ENCODE measurements at regions of chr12 and their contacts with region 1.

Region 1: GRCh38 chr12:52380271-52380694 is 5.2 kb downstream of the KRT84 start:
- DNase-seq: peak; percentile 53
- H3K4me3 ChIP-seq: no peak overlapping the region
- H3K27ac ChIP-seq: no peak overlapping the region
- H3K4me1 ChIP-seq: no peaks in the 10 kb centered on the region; a peak in 1 of 4 replicates
- H3K27me3 ChIP-seq: peaks cover 75% of the 10 kb centered on the region
- CTCF ChIP-seq: peak; percentile 68
- EP300 ChIP-seq: no peak
- RAD21 ChIP-seq: peak; percentile 47

Region 2: DNA sequence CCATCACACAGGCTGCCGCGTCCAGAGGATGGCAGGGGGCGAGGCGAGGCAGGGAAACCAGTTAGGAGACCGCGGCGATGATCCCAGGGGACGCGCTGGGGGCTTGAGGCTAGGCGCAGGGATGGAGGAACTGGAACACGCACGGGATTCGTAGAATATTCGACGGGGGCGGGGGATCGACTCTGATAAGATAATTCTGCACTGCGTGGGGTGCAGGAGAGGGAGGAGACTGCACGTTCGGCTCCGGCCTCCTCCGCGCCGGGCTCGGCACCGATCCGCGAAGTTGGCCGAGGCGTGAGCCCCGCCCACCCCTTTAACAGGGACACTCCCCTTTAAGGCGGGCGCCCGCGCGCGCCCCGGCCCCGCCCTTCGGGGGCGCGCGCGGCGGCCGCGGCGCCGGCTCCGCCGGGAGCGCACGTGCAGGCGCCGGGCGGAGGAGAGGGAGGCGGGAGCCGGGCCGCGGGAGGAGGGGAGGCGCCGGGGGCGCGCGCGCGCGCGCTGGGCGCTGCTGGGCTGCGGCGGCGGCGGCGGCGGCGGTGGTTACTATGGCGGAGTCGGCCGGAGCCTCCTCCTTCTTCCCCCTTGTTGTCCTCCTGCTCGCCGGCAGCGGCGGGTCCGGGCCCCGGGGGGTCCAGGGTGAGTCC is 429.0 kb before region 1 on chr12 and contains the start of gene ACVR1B:
- CTCF ChIA-PET with region 1: no interaction called
- POLR2A ChIA-PET with region 1: no interaction called
- DNase-seq: peak; percentile 95
- H3K4me3 ChIP-seq: peak within 1 kb of the TSS; percentile 84 to 94
- H3K27ac ChIP-seq: peak within 1 kb of the TSS in 1 of 2 experiments; percentile 89; a peak in 2 of 4 replicates
- H3K4me1 ChIP-seq: peaks cover 6 to 20% of the 10 kb centered on the region in 2 experiments; a peak in 2 of 4 replicates
- H3K27me3 ChIP-seq: 0 out of 2 replicates have a peak, but pooled peaks cover 9% of the 10 kb centered on the region
- CTCF ChIP-seq: no peak
- EP300 ChIP-seq: no peak; a peak in 1 of 4 replicates
- RAD21 ChIP-seq: peak; percentile 10; the same call in 1 of the 2 replicates
- polyA plus RNA-seq, gene ACVR1B: 12.1 and 13.5 TPM in 2 replicates

Region 3: GRCh38 chr12:52390739-52391617 is 10.7 kb after region 1 on chr12:
- CTCF ChIA-PET with region 1: interaction called, 14 read pairs
- POLR2A ChIA-PET with region 1: no interaction called
- DNase-seq: peak; percentile 44
- H3K4me3 ChIP-seq: no peak overlapping the region
- H3K27ac ChIP-seq: no peak overlapping the region
- H3K4me1 ChIP-seq: peaks cover 0 to 7% of the 10 kb centered on the region in 2 experiments; a peak in 1 of 4 replicates
- H3K27me3 ChIP-seq: peaks cover 46% of the 10 kb centered on the region; the same call in 1 of the 2 replicates
- CTCF ChIP-seq: peak; percentile 62
- EP300 ChIP-seq: no peak
- RAD21 ChIP-seq: peak; percentile 44

Region 4: DNA sequence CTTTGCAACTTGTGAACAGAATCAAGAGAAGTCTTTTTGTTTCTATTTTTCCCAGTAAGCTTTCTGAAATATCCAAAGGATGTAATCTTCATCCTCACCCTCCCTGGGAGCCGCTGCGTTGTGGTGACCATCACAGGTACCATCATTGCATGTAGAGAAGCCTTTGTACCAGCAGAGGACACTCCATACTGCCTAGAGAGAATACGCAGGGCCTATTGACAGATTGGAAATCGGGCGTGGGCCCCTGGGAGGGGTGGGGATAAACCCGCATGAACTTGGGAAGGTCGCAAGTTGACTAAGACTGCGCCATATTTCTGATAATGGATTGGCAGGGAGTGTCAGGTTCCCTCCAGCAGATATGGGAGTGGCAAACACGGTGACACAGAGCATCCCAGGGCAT is 287.2 kb after region 1 on chr12:
- CTCF ChIA-PET with region 1: no interaction called
- POLR2A ChIA-PET with region 1: no interaction called
- DNase-seq: no peak
- H3K4me3 ChIP-seq: no peak overlapping the region
- H3K27ac ChIP-seq: no peak overlapping the region
- H3K4me1 ChIP-seq: no peaks in the 10 kb centered on the region
- H3K27me3 ChIP-seq: peaks cover 40% of the 10 kb centered on the region
- CTCF ChIP-seq: peak; percentile 23; the same call in 1 of the 2 replicates
- EP300 ChIP-seq: no peak
- RAD21 ChIP-seq: no peak